Activated CD4-positive, alpha-beta memory T cell treated with anti-CD3 and anti-CD28 coated beads for 36 hours (primary cell): ENCODE measurements at regions of chr7 and their contacts with region 1.

Region 1: DNA sequence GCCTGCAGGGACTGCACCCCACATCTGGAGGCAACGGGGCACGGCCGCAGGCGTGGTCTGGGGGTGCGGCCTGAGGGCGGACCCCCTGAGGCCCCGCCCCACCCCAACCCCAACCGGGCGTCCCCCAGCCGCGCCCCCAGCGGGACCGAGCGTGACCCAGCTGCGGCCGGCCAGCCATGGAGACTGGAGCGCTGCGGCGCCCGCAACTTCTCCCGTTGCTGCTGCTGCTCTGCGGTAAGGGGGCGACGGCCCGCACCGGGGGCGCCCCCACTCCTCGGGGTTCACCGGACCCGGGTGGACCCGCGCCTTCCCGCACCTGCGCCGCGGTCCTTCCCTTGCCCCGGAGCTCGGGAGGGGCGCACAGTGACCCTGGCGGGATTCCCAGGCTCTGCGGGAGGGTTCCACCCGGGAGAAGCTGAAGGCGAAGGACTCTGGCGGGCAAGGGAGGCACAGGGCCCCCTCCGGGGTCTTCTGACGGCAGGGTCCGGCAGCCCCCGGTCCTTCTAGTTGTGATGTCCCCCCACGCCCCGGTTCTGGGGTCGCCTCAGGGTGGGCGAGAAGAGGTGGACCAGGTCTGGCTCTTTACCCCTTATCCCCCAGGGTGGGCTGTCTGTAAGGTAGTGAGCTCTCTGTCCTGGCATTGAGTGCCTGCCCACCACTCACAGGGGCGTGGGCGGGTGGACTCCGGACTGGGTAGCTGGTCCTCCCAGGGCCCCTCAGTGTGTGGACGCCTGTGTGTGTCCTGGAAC is at the start of gene RAMP3:
- DNase-seq: no peak
- H3K4me3 Mint-ChIP-seq: no peak within 1 kb of the TSS
- H3K27ac Mint-ChIP-seq: no peak within 1 kb of the TSS
- H3K4me1 Mint-ChIP-seq: no peaks in the 10 kb centered on the region
- H3K27me3 Mint-ChIP-seq: peaks cover 18% of the 10 kb centered on the region
- total RNA-seq, gene RAMP3: not detected

Region 2: GRCh38 chr7:45174966-45175765 is 17.3 kb after region 1 on chr7:
- CTCF ChIA-PET with region 1: interaction called, 10 read pairs
- POLR2A ChIA-PET with region 1: no interaction called
- intact Hi-C with region 1: no loop called
- DNase-seq: no peak
- H3K4me3 Mint-ChIP-seq: no peak overlapping the region
- H3K27ac Mint-ChIP-seq: no peak overlapping the region
- H3K4me1 Mint-ChIP-seq: no peaks in the 10 kb centered on the region
- H3K27me3 Mint-ChIP-seq: peaks cover 3% of the 10 kb centered on the region

Region 3: GRCh38 chr7:45259966-45260646 is 102.3 kb after region 1 on chr7:
- CTCF ChIA-PET with region 1: interaction called, 141 read pairs
- POLR2A ChIA-PET with region 1: no interaction called
- intact Hi-C with region 1: loop called (anchors 1 kb)
- DNase-seq: peak; percentile 80
- H3K4me3 Mint-ChIP-seq: no peak overlapping the region
- H3K27ac Mint-ChIP-seq: no peak overlapping the region
- H3K4me1 Mint-ChIP-seq: no peaks in the 10 kb centered on the region
- H3K27me3 Mint-ChIP-seq: peaks cover 14% of the 10 kb centered on the region